H1 (cell line): ENCODE measurements at regions of chr17 and their contacts with region 1.

Region 1: DNA sequence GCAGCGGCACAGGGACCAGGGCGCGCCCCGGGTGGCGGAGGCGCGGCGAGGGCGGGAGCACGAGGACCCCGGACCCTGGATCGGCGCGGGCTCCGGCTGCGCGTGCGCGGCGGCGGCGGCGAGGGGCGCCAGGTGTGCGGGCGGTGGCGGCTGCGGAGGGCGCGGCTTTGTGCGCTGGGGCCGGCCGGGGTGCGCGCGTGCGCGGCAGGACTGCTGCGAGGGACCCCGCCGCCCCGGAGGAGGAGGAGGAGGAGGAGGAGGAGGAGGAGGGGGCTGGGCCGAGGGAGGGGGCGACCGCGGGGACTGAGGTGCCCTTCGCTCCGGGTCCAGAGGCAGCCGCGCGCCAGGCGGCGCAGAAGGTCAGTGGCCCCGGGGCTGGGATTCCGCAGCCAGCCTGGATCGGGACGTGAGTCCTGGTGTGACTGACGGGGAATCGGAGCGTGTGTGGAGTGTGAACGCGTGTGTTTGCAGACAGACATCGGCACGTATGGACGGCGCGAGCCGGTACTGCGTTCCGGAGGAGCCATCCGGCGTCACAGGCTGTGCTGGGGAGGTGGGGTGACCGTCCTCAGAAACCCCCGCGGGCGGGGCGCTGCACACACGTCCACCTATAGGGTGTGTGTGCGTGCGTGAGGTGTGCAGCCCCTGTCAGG is 19.5 kb upstream of the RAP1GAP2 start:
- DNase-seq: peak in 1 of 2 experiments; percentile 86
- H3K4me3 ChIP-seq: peak overlapping the region; percentile 72 to 86 (median 80)
- H3K27ac ChIP-seq: no peak overlapping the region
- H3K4me1 ChIP-seq: peaks cover 0 to 7% (median 5%) of the 10 kb centered on the region in 4 experiments; a peak in 4 of 7 replicates
- H3K27me3 ChIP-seq: peaks cover 0 to 5% (median 4%) of the 10 kb centered on the region in 4 experiments; a peak in 2 of 7 replicates
- CTCF ChIP-seq: no peak
- EP300 ChIP-seq: no peak
- POLR2A ChIP-seq: no peak; a peak in 1 of 3 replicates
- RAD21 ChIP-seq: no peak

Region 2: DNA sequence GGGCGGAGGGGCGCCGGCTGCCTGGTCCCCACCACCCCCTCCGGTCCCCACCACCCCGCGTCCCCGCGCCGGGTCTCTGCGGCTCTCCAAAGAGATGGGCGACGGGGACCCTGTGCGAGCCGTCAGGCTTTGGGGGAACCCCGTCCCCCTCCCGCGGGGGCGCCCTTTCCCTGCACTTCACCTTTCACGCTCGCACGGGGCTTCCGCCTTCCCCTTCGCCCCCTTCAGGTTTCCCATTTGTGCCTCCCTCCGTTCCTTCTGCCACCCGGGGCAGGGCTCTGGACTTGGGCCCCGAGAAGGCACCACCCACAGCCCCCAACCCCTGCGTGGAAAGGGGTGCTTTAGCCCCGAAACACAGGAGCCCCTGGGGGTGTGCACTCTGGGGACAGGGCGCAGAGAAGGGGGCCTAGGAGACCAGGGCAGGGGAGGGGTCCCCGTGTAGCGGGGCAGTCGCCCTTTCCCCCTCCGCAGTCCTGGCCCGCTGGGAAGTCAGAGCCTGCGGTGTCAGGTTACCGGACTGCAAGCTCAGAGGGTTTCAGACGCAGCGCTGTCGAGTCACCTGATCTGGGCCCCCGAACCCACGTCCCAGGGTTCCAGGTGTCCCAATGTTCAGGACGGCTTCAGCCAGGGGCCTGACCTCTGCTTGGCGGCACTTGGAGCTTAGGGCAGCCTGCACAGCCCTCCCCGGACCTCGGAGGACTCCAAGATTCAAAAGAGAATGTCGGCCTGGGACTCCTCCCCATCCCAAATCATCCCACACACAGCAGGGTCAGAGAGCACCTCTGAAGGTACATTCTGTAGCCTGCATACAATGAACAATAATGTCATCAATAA is 20.6 kb before region 1 on chr17:
- CTCF ChIA-PET with region 1: interaction called, 21 read pairs
- POLR2A ChIA-PET with region 1: interaction called, 5 read pairs
- DNase-seq: peak in 1 of 2 experiments; percentile 88
- H3K4me3 ChIP-seq: peak overlapping the region; percentile 47 to 80 (median 62)
- H3K27ac ChIP-seq: no peak overlapping the region
- H3K4me1 ChIP-seq: peaks cover 4 to 6% (median 4%) of the 10 kb centered on the region in 4 experiments; a peak in 5 of 7 replicates
- H3K27me3 ChIP-seq: peaks cover 0 to 8% (median under 1%) of the 10 kb centered on the region in 4 experiments; a peak in 3 of 7 replicates
- CTCF ChIP-seq: peak in 1 of 3 experiments; percentile 8; a peak in 1 of 4 replicates
- EP300 ChIP-seq: no peak
- POLR2A ChIP-seq: no peak
- RAD21 ChIP-seq: no peak; a peak in 1 of 4 replicates

Region 3: DNA sequence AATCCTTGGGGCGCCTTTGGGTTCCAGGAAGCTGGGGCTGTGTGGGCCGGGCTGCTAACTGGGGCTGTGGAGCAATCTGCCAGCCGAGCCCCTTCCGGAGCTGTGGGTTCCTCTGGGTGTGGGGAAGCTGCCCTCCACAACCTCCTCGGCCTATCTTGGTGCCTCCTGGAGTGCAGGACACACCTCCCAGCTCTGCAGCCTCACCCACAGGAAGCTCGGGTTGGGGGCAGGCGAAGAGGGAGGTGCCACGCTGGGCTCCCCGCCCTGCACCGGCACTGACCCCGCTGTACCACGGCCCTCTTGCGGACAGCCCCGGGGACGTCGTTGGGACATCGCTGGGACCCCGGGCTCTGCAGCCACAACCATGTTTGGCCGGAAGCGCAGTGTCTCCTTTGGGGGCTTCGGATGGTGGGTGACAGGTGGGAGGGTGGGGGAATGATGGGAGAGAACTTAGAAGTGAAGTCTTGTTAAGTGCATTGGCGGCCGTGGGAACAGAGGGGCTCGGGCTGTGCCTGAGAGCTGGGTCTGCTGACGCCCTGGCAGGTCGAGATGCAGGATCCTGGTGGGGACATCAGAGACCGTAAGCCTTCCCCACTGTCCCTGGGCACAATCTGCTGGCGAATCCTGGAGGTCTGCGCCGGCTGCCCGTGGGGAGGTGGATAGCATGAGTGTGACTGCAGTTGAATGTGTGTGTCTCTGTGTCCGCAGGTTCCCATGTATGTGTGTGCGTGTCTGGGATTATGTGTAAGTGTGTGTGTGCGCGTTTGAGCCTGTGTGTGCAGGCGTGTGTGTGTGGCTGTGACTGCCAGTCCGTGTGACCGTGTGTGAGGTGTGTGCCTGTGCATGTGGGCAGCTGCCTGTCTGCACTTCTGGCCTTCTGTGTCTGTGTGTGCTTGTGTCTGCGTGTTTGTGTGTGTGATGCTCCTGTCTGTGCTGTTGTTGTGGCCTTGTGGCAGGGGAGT is 19.7 kb after region 1 on chr17 and contains the start of gene RAP1GAP2:
- CTCF ChIA-PET with region 1: interaction called, 15 read pairs
- POLR2A ChIA-PET with region 1: no interaction called
- DNase-seq: no peak
- H3K4me3 ChIP-seq: no peak within 1 kb of the TSS
- H3K27ac ChIP-seq: no peak within 1 kb of the TSS
- H3K4me1 ChIP-seq: peaks cover 0 to 8% (median 4%) of the 10 kb centered on the region in 4 experiments; a peak in 4 of 7 replicates
- H3K27me3 ChIP-seq: no peaks in the 10 kb centered on the region
- CTCF ChIP-seq: no peak
- EP300 ChIP-seq: no peak
- POLR2A ChIP-seq: no peak
- RAD21 ChIP-seq: no peak
- total RNA-seq, gene RAP1GAP2: 63.4 and 63.8 TPM in 2 replicates

Region 4: DNA sequence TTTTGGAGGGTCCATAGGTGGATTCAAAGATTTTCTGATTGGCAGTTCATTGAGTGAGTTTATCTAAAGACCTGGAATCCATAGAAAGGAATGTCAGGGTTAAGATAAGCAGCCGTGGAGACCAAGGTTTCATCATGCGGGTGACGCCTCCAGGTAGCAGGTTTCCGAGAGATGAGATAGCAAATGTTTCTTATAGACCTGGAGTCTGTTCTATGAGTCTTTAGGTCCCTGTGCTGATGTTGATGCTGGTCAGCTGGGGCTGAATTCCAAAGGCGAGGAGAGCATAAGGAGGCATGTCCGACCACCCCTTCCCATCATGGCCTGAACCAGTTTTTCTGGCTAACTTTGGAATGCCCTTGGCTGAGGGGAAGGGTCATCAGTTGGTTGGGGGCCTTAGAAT is 99.8 kb after region 1 on chr17:
- CTCF ChIA-PET with region 1: no interaction called
- POLR2A ChIA-PET with region 1: no interaction called
- DNase-seq: no peak
- H3K4me3 ChIP-seq: no peak overlapping the region
- H3K27ac ChIP-seq: no peak overlapping the region
- H3K4me1 ChIP-seq: peaks cover 14 to 34% (median 23%) of the 10 kb centered on the region in 4 experiments
- H3K27me3 ChIP-seq: no peaks in the 10 kb centered on the region
- CTCF ChIP-seq: no peak
- EP300 ChIP-seq: no peak
- POLR2A ChIP-seq: no peak
- RAD21 ChIP-seq: no peak